ENCODE measurements at regions of chr21 and their contacts with region 1.

Region 1: DNA sequence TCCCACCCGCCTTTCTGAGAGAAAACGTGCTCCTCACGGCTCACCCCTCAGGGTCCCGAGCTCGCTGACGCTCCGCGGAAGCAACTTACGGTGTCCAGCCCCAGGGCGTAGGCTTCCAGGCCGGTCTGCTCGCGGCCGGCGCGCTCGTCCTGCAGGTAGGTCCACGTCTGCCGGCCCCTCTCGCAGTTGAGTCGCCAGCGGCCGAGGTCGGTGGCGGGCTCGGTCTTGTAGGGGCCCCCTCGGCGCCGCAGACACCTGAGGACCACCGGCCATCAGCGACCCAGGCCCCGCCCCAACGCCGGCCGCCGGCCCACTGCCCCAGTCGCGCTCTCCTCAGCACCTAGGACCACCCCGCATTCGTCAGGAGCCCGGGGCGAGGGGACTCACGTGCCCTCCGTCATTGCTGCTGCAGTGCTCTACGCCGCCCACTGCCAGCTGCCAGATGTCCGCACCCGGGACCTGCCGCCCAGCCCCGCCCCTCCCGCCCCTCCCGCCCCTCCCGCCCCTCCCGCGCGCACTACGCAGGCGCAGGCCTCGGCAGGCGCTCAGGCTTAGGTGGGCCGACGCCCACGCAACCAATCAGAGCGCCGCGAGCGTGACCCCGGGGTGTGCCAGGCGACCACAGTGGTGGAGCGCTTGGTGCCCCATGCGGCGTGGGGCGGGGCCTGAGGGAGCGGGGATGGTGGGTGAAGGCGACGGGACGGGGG is at the start of gene LSS:
- DNase-seq: peak; percentile 98
- H3K4me3 ChIP-seq: peak within 1 kb of the TSS; percentile 78 to 96 (median 88)
- H3K27ac ChIP-seq: peak within 1 kb of the TSS; percentile 88 to 90 (median 89)
- H3K4me1 ChIP-seq: peaks cover 25 to 50% (median 44%) of the 10 kb centered on the region in 4 donors
- H3K27me3 ChIP-seq: no peaks in the 10 kb centered on the region
- CTCF ChIP-seq: no peak
- EP300 ChIP-seq: no peak
- POLR2A ChIP-seq: peak; percentile 50
- total RNA-seq, gene LSS: 45.3 to 66.3 (median 53.1) TPM

Region 2: DNA sequence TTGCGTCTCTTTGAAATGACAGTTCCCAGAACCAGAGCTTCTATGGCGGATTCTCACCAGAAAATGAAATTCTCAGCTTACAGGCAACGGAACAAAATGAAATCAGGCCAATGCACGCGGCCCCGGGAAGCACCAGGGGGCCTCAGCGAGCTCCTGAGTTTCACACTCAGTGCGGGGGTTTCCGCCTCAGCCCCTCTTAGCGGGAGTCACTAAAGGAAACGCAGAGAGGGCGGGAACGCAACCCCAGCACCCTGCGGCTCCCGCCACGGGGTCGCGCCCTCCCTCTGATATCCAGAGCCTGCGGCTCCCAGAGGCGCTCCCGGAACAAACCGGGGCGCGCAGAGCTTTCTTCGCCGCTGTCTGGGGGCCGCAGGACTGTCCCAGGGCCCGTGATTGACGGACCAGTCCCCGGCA is 254.8 kb before region 1 on chr21:
- intact Hi-C with region 1: loop called (anchors 2 kb)
- DNase-seq: no peak
- H3K4me3 ChIP-seq: peak overlapping the region; percentile 59 to 62 (median 61)
- H3K27ac ChIP-seq: peak overlapping the region; percentile 96 to 99 (median 98)
- H3K4me1 ChIP-seq: peaks cover 64 to 86% (median 80%) of the 10 kb centered on the region in 4 donors
- H3K27me3 ChIP-seq: no peaks in the 10 kb centered on the region
- CTCF ChIP-seq: peak; percentile 69 to 82 (median 78)
- EP300 ChIP-seq: no peak
- POLR2A ChIP-seq: no peak

Region 3: DNA sequence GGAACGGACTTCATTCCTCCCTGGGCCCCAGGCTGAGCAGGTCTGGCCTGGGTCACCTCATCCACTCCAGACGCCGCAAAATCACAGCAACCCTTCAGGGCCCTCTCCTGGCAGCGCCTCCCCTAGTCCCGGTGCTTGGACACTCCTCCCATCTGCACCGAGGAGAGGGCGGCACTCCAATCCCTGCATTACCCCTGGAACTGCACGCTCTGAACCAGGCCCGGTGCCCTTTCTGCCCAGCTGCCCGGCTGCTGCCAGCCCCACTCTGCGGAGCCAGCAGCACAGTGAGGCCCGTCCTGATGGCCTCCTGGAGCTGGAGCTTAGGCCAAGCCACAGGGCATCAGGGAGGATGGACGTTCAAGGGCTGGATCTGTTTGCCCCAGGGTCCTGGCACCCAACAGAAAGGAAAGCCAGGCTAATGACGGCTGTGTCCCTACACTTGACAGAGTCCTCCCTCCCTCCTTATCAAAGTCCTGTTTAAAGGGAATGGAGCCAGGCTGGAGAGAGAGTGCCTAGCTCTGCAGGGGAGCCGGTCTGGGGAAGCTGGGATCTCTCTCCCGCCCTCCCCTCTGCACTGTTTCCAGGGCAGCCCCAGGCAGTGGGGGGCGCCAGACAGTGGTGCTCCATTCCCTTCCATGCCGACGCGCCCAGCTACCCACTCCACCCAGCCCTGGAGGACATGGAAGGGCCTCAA is 117.9 kb before region 1 on chr21:
- intact Hi-C with region 1: no loop called
- DNase-seq: peak; percentile 92
- H3K4me3 ChIP-seq: peak overlapping the region in 2 of 4 donors; percentile 1 to 24
- H3K27ac ChIP-seq: peak overlapping the region; percentile 60 to 72 (median 66)
- H3K4me1 ChIP-seq: peaks cover 24 to 41% (median 34%) of the 10 kb centered on the region in 4 donors
- H3K27me3 ChIP-seq: no peaks in the 10 kb centered on the region
- CTCF ChIP-seq: peak in 2 of 3 experiments; percentile 36 to 44
- EP300 ChIP-seq: no peak
- POLR2A ChIP-seq: no peak

Region 4: DNA sequence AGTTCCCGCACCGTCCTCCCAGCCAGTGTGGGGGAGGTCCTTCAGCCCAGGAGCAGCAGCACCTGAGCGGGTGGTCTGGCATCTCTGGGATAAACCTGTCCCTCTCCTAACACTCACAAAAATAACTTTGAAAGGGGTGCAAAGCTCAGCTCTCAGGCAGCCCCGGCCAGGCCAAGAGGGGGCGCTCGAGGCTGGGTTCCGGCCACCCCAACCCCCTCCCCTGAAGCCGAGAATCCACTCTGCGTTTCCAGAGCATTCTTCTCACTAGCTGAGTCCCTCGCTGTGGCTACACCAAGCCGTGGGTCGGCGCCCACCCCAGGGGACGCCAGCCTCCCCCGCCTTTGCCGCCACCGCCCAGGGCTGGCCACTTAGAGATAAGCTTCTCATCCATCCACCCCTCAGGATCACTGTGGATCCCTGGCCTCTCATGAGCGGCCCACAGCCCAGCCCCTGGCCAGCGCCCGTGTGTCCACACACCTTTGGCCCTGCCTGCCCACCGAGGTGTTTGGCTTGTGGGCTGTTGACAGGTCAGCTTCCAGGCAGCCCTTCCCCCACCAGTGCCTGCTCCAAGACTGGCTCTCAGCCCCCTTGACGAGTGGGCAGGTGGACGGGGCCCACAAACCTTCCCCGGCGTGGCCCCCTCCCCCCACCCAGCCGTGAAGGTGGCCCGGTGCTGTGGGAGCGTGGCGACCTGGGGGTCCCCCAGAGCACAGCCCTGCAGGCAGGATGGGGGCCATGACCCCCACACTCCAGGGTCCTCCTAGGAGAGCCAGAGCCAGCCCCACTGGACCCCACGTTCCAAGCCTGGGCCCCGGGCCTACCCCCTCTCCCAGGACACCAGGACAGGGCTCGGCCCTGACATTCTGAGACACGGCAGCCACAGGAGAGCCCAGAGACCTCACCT is 75.0 kb before region 1 on chr21:
- intact Hi-C with region 1: loop called (anchors 5 kb)
- DNase-seq: no peak
- H3K4me3 ChIP-seq: peak overlapping the region; percentile 17 to 41 (median 39)
- H3K27ac ChIP-seq: peak overlapping the region in 2 of 4 donors; percentile 37 to 68
- H3K4me1 ChIP-seq: peaks cover 10 to 18% (median 12%) of the 10 kb centered on the region in 4 donors
- H3K27me3 ChIP-seq: peaks cover 0 to 11% (median 0%) of the 10 kb centered on the region in 4 donors
- CTCF ChIP-seq: peak; percentile 70 to 83 (median 80)
- EP300 ChIP-seq: no peak
- POLR2A ChIP-seq: no peak

Region 5: DNA sequence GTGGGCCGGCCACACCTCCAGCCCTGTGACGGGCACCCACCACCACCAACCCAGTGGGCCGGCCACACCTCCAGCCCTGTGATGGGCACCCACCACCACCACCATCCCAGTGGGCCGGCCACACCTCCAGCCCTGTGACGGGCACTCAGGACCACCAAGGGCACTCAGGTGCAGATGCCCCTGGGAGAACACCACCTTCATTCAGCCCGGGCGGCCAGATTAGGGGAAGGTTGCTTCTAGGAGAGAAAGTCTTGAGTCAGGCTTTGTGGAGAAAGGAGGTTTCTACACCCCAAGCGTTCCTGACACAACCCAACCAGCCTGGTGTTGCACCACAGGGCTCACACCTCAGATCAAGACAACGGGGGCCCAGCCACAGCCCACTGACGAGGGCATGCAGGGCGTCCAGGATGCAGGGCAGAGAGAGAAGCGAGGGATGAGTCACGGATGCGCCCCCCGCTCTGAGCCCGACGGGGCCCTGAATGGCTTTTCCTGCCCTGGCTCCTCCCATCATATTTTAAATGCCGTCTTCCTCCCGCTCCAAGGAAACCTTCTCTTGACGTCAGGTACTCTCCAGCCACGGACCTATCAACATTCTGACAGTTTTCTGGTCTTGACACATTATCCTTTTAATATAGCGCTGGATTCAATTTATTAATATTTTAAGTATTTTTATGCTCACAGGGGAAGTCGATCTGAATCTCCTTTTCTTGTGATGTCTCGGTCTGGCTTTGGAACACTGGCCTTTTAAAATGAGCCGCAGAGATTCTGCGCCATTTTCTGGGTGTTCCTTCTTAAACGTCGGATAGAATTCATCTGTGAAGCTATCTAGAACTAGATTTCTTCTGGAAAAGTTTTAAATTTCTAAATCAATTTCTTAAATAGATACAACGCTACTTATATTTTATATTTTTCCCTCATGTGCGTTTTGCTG is 43.6 kb before region 1 on chr21:
- intact Hi-C with region 1: loop called (anchors 5 kb)
- DNase-seq: peak; percentile 93
- H3K4me3 ChIP-seq: peak overlapping the region; percentile 39 to 71 (median 60)
- H3K27ac ChIP-seq: peak overlapping the region; percentile 46 to 91 (median 76)
- H3K4me1 ChIP-seq: peaks cover 26 to 55% (median 32%) of the 10 kb centered on the region in 4 donors
- H3K27me3 ChIP-seq: peaks cover 0 to 20% (median 0%) of the 10 kb centered on the region in 4 donors
- CTCF ChIP-seq: no peak
- EP300 ChIP-seq: no peak
- POLR2A ChIP-seq: no peak

Region 6: GRCh38 chr21:46285761-46286496 is 57.4 kb after region 1 on chr21 and contains the start of gene YBEY:
- intact Hi-C with region 1: loop called (anchors 5 kb)
- DNase-seq: peak; percentile 95
- H3K4me3 ChIP-seq: peak within 1 kb of the TSS; percentile 82 to 99 (median 95)
- H3K27ac ChIP-seq: peak within 1 kb of the TSS; percentile 90 to 99 (median 98)
- H3K4me1 ChIP-seq: peaks cover 40 to 60% (median 56%) of the 10 kb centered on the region in 4 donors
- H3K27me3 ChIP-seq: no peaks in the 10 kb centered on the region
- CTCF ChIP-seq: peak; percentile 31 to 52 (median 43)
- EP300 ChIP-seq: no peak
- POLR2A ChIP-seq: peak; percentile 35
- total RNA-seq, gene YBEY: 8.1 to 17.2 (median 10.6) TPM

Region 7: DNA sequence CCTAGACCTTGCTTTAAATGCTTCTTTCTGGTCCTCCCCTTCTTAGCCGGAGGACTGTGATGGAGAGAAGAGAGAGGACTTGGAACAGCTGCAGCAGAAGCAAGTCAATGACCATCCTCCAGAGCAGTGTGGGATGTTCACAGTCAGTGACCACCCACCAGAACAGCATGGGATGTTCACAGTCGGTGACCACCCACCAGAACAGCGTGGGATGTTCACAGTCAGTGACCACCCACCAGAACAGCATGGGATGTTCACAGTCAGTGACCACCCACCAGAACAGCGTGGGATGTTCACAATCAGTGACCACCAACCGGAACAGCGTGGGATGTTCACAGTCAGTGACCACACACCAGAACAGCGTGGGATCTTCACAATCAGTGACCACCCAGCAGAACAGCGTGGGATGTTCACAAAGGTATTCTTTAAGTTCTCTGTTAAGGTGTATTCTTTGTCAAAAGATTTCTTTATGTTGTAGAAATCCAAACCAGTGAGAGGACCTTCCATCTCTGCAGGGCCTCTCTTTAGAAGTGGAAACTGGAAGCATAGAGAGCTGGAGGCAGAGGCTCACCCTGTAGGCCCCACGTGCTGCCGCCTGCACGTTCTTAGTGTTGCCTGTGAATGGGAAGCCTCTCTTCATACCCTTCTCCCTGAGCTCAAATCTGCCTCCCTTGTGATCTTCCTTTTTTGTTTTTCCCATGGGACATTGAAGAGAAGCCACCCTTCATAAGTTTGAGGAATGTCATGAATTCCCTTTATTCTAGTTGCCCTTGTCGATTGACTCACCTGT is 106.0 kb after region 1 on chr21:
- intact Hi-C with region 1: no loop called
- DNase-seq: no peak
- H3K4me3 ChIP-seq: no peak overlapping the region
- H3K27ac ChIP-seq: no peak overlapping the region
- H3K4me1 ChIP-seq: no peaks in the 10 kb centered on the region
- H3K27me3 ChIP-seq: no peaks in the 10 kb centered on the region
- CTCF ChIP-seq: no peak
- EP300 ChIP-seq: no peak
- POLR2A ChIP-seq: no peak

Region 8: GRCh38 chr21:46402421-46402820 is 173.9 kb after region 1 on chr21:
- intact Hi-C with region 1: no loop called
- DNase-seq: no peak
- H3K4me3 ChIP-seq: no peak overlapping the region
- H3K27ac ChIP-seq: no peak overlapping the region
- H3K4me1 ChIP-seq: no peaks in the 10 kb centered on the region
- H3K27me3 ChIP-seq: no peaks in the 10 kb centered on the region
- CTCF ChIP-seq: no peak
- EP300 ChIP-seq: no peak
- POLR2A ChIP-seq: no peak

Measured in esophagus muscularis mucosa (tissue), 4 donors.